HCT116 (cell line): ENCODE measurements at regions of chr15 and their contacts with region 1.

Region 1: GRCh38 chr15:51192521-51193280 is 98.0 kb upstream of the TNFAIP8L3 start:
- DNase-seq: peak; percentile 61
- ATAC-seq: peak; percentile 99
- H3K4me3 ChIP-seq: no peak overlapping the region
- H3K27ac ChIP-seq: no peak overlapping the region
- H3K4me1 ChIP-seq: peaks cover 0 to 4% of the 10 kb centered on the region in 2 experiments; a peak in 3 of 4 replicates
- H3K27me3 ChIP-seq: no peaks in the 10 kb centered on the region; the same call in 1 of the 2 replicates
- CTCF ChIP-seq: peak; percentile 66 to 97 (median 96); a peak in 5 of 6 replicates
- POLR2A ChIP-seq: no peak
- RAD21 ChIP-seq: peak; percentile 73

Region 2: GRCh38 chr15:51205071-51205959 is 12.6 kb after region 1 on chr15:
- CTCF ChIA-PET with region 1: interaction called, 13 read pairs
- POLR2A ChIA-PET with region 1: no interaction called
- RAD21 ChIA-PET with region 1: no interaction called
- intact Hi-C with region 1: no loop called
- DNase-seq: no peak
- ATAC-seq: no peak
- H3K4me3 ChIP-seq: no peak overlapping the region
- H3K27ac ChIP-seq: no peak overlapping the region
- H3K4me1 ChIP-seq: peaks cover 0 to 3% of the 10 kb centered on the region in 2 experiments; a peak in 1 of 4 replicates
- H3K27me3 ChIP-seq: no peaks in the 10 kb centered on the region
- CTCF ChIP-seq: no peak
- POLR2A ChIP-seq: no peak
- RAD21 ChIP-seq: no peak

Region 3: DNA sequence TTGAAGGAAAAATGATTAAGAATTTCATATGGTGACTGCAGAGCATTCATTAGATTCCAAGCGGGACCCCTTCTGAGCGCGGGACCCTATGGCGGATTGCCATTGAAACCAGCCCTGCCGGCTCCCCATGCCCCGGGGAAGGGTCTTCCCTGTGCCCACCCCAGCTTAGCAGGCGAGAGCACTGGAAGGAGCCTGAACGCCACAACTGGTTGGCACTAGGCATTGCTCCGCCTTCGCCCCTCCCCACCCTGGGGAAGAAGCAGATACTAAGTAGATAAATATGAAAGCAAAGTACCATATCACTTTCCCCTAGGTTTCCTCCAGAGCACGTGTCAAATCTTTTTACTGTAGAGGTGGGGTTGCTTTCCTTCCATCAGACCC is 75.0 kb after region 1 on chr15:
- CTCF ChIA-PET with region 1: no interaction called
- POLR2A ChIA-PET with region 1: no interaction called
- RAD21 ChIA-PET with region 1: no interaction called
- intact Hi-C with region 1: no loop called
- DNase-seq: no peak
- ATAC-seq: no peak
- H3K4me3 ChIP-seq: no peak overlapping the region
- H3K27ac ChIP-seq: no peak overlapping the region
- H3K4me1 ChIP-seq: no peaks in the 10 kb centered on the region
- H3K27me3 ChIP-seq: no peaks in the 10 kb centered on the region
- CTCF ChIP-seq: no peak
- POLR2A ChIP-seq: no peak
- RAD21 ChIP-seq: no peak